Left lung (tissue), 14 donors: ENCODE measurements at regions of chr7 and their contacts with region 1.

Region 1: DNA sequence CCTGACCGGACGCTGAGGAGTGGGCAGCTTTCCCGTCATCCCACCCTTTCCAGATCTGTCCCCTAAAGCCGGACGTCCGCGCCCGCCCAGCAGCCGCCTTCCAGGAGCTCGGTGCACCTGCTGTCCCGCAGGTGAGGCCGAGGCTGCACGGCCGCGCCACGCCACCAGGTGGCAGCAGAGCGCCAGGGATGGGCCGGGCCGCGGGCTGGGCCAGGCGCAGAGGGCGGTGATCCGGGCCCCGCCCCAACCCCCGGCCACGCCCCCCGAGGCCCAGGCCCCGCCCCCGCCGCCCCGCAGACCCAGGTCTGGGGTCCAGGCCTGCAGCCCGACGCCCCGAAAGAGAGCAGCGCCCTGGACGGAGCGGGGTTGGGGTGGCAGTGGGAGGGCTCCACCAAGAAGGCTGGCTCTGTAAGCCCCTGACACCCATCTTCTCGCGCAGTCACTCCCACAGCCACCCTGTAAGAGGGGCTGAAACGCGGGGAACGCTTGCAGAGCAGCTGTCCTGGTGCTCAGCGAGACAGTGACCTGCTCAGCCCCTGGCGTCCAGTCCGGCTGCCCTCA is 32.2 kb downstream of the FOXL3 start:
- DNase-seq: peak in 3 of 4 donors; percentile 68 to 96 (median 72)
- ATAC-seq: peak; percentile 84
- H3K4me3 ChIP-seq: no peak overlapping the region
- H3K27ac ChIP-seq: no peak overlapping the region
- H3K4me1 ChIP-seq: peaks cover 0 to 15% of the 10 kb centered on the region in 2 donors
- H3K27me3 ChIP-seq: peaks cover 0 to 26% of the 10 kb centered on the region in 2 donors
- CTCF ChIP-seq: peak; percentile 92 to 98

Region 2: DNA sequence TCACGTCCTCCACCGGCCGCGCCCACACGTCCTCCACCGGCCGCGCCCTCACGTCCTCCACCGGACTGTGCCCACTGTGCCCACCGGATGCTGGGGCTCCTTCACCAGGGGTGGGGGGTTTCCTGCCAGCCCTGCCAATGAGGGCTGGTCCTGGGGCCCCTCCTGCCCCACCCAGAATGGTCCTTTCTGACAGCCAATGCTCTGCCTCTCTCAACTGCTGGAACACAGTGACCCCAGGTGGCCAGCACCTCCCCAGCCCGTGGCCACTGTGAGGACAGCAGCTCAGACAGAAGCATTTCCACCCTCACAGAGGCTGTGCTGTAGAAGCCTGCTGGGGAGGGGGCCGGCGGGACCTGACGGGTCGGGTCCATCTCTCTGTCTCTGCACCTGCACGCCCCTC is 314.2 kb after region 1 on chr7:
- intact Hi-C with region 1: loop called in 1 of 2 experiments (anchors 10 kb)
- DNase-seq: peak in 1 of 4 donors; percentile 83
- ATAC-seq: peak; percentile 42
- H3K4me3 ChIP-seq: no peak overlapping the region
- H3K27ac ChIP-seq: no peak overlapping the region
- H3K4me1 ChIP-seq: no peaks in the 10 kb centered on the region
- H3K27me3 ChIP-seq: no peaks in the 10 kb centered on the region
- CTCF ChIP-seq: peak; percentile 14 to 47

Region 3: GRCh38 chr7:774161-775109 is 452.2 kb after region 1 on chr7:
- intact Hi-C with region 1: loop called in 1 of 2 experiments (anchors 5 kb)
- DNase-seq: peak in 3 of 4 donors; percentile 12 to 89 (median 54)
- ATAC-seq: peak; percentile 85
- H3K4me3 ChIP-seq: no peak overlapping the region
- H3K27ac ChIP-seq: no peak overlapping the region
- H3K4me1 ChIP-seq: peaks cover 5 to 7% of the 10 kb centered on the region in 2 donors
- H3K27me3 ChIP-seq: no peaks in the 10 kb centered on the region
- CTCF ChIP-seq: peak; percentile 87